ENCODE measurements at regions of chr7 and their contacts with region 1.

Region 1: DNA sequence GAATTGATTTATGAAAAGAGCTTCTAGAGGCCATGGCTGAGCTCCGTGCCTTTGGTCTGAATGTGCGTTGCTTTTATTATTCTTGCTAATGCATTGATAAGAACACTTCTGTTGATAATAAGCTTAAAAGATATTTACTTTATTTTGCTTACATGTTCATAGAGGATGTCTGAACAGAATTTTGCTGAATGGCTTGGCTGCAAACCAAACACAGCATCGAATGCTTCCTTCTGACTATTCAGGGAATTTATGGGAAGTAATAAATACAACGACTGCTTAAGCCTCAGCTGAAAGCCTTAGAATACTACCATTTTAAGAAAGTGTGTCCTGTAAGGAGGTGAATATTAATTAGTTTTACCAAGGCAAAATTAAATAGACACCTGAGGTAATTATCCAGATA is 643.5 kb upstream of the POT1 start:
- DNase-seq: no peak
- ATAC-seq: no peak
- H3K4me3 ChIP-seq: no peak overlapping the region
- H3K27ac ChIP-seq: no peak overlapping the region
- H3K4me1 ChIP-seq: no peaks in the 10 kb centered on the region
- H3K27me3 ChIP-seq: no peaks in the 10 kb centered on the region
- CTCF ChIP-seq: no peak
- POLR2A ChIP-seq: no peak

Region 2: DNA sequence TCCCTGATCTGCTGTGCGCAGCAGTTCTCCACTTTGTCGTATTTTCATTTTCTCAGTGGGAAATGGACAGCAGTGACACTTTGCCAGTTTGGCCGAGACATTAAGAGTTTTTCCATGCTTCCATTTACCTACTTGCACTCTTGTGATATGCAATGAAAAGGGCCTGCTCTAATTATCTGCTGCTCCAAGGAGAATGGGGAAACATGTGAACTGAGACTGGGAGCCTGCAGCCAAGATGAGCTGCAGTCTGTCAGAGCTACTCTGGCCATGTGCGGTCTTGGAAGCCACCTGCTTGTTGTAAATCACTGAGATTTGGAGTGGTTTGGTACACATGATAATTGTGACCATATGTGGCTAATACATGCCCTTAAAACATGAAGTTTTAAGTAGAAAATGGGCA is 56.9 kb before region 1 on chr7:
- intact Hi-C with region 1: loop called in 1 of 10 experiments (anchors 10 kb)
- DNase-seq: no peak
- ATAC-seq: no peak
- H3K4me3 ChIP-seq: no peak overlapping the region
- H3K27ac ChIP-seq: no peak overlapping the region
- H3K4me1 ChIP-seq: no peaks in the 10 kb centered on the region
- H3K27me3 ChIP-seq: no peaks in the 10 kb centered on the region
- CTCF ChIP-seq: no peak
- POLR2A ChIP-seq: no peak

Region 3: DNA sequence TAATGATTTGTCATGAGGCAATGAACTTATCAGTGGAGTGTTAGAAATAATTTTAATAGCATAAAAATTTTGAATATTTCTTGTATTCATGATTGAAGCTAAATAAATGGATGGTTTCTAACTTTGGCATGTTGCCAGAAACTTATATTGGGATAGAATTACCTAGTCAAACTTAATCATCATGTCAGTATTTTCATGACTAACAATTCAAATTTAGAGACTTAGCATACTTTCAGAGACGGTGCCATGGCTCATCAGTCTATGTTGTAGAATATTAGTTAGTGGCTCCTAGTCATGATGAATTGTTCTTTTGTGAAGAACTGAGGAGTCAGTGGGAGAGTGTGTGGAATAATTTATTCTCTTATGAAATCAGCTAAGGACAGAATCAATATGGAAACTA is 43.9 kb before region 1 on chr7:
- intact Hi-C with region 1: loop called in 1 of 10 experiments (anchors 5 kb)
- DNase-seq: no peak
- ATAC-seq: no peak
- H3K4me3 ChIP-seq: no peak overlapping the region
- H3K27ac ChIP-seq: no peak overlapping the region
- H3K4me1 ChIP-seq: no peaks in the 10 kb centered on the region
- H3K27me3 ChIP-seq: no peaks in the 10 kb centered on the region
- CTCF ChIP-seq: no peak
- POLR2A ChIP-seq: no peak